ENCODE measurements at regions of chr2 and their contacts with region 1.

Region 1: GRCh38 chr2:96407041-96407918 is 71.7 kb downstream of the NCAPH start:
- DNase-seq: peak; percentile 79
- ATAC-seq: peak; percentile 97
- H3K4me3 ChIP-seq: no peak overlapping the region
- H3K27ac ChIP-seq: no peak overlapping the region
- H3K4me1 ChIP-seq: peaks cover 2% of the 10 kb centered on the region; the same call in 1 of the 2 replicates
- H3K27me3 ChIP-seq: peaks cover 37% of the 10 kb centered on the region
- CTCF ChIP-seq: peak; percentile 81
- POLR2A ChIP-seq: no peak
- RAD21 ChIP-seq: peak; percentile 74

Region 2: GRCh38 chr2:96554293-96555145 is 147.2 kb after region 1 on chr2:
- CTCF ChIA-PET with region 1: interaction called, 3 read pairs
- POLR2A ChIA-PET with region 1: no interaction called
- dilution Hi-C with region 1: no loop called
- in situ Hi-C with region 1: no loop called
- intact Hi-C with region 1: loop called (anchors 1 kb)
- DNase-seq: peak; percentile 41
- ATAC-seq: peak; percentile 90
- H3K4me3 ChIP-seq: no peak overlapping the region
- H3K27ac ChIP-seq: no peak overlapping the region
- H3K4me1 ChIP-seq: no peaks in the 10 kb centered on the region
- H3K27me3 ChIP-seq: no peaks in the 10 kb centered on the region
- CTCF ChIP-seq: peak; percentile 78
- POLR2A ChIP-seq: no peak
- RAD21 ChIP-seq: peak; percentile 85

Region 3: DNA sequence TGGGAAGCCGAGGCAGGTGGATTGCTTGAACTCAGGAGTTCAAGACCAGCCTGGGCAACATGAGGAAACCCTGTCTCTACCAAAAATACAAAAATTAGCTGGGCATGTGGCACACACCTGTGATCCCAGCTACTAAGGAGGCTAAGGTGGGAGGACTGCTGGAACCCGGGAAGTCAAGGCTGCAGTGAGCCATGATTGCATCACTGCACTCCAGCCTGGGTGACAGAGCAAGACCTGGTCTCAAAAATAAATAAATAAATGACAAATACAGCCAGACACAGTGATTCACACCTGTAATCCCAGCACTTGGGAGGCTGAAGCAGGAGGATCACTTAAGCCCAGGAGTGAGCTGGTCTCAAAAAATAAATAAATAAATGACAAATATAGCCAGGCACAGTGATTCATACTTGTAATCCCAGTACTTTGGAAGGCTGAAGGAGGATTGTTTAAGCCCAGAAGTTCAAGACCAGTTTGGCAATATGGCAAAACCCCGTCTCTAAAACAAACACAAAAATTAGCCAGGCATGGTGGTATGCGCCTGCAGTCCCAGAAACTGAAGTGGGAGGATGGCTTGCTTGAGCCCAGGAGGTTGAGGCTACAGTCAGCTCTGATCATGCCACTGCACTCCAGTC is 224.6 kb after region 1 on chr2:
- CTCF ChIA-PET with region 1: no interaction called
- POLR2A ChIA-PET with region 1: no interaction called
- dilution Hi-C with region 1: no loop called
- in situ Hi-C with region 1: no loop called
- intact Hi-C with region 1: no loop called
- DNase-seq: peak; percentile 91
- ATAC-seq: peak; percentile 79
- H3K4me3 ChIP-seq: no peak overlapping the region
- H3K27ac ChIP-seq: no peak overlapping the region
- H3K4me1 ChIP-seq: peaks cover 7% of the 10 kb centered on the region
- H3K27me3 ChIP-seq: no peaks in the 10 kb centered on the region
- CTCF ChIP-seq: no peak
- POLR2A ChIP-seq: no peak
- RAD21 ChIP-seq: no peak